CD8-positive, alpha-beta T cell (primary cell): ENCODE measurements at regions of chrX and their contacts with region 1.

Region 1: DNA sequence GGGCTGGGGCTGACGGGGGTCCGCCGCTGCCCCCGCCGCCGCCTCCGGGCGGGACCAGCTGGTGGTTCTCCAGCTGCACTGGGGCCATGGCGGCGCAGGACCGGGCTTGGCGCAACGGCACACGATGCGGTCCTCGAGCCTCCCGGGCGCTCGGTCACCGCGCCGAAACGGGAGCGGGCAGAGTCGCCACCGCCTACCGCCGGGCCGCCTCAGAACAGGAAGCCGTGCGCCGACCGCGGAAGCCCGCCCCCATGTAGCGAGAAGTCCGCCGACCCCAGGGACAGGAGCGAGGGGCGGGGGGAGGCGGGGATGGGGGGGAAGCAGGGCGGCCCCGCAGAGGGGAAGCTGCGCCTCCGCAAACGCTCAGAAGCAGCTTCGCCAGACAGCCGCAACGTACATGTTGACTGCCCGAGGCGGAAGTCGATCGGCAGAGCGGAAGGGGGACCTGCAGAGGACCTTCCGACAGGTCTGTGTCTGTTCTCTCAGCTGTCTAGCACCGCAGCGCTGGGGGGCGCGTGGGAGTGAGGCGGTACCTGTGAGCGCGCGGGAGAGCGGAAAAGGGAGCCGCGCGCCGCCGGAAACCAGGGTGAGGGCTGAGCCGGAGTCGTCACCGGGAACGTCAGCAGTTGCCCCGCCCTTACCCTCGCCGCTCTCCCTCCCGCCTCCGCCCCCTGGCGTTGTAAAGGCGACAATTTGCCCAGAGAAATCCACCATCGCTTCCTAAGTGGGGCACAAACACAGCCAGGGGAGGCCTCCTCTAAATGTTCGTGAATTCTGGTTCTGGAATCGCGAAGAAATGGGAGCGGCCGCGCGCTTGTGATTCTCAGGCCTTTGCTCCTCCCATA is at the start of gene MED14:
- DNase-seq: peak; percentile 76 to 96 (median 95)
- ATAC-seq: peak; percentile 89
- H3K4me3 ChIP-seq: peak within 1 kb of the TSS; percentile 77 to 84
- H3K4me3 Mint-ChIP-seq: peak within 1 kb of the TSS; percentile 89
- H3K27ac ChIP-seq: peak within 1 kb of the TSS; percentile 98 to 99
- H3K27ac Mint-ChIP-seq: peak within 1 kb of the TSS; percentile 97
- H3K4me1 ChIP-seq: peaks cover 13% of the 10 kb centered on the region
- H3K4me1 Mint-ChIP-seq: peaks cover 52% of the 10 kb centered on the region
- H3K27me3 ChIP-seq: no peaks in the 10 kb centered on the region
- H3K27me3 Mint-ChIP-seq: no peaks in the 10 kb centered on the region
- CTCF ChIP-seq: peak; percentile 36
- total RNA-seq, gene MED14: 69.7 to 70.2 TPM

Region 2: GRCh38 chrX:40539214-40540142 is 196.1 kb before region 1 on chrX:
- CTCF ChIA-PET with region 1: no interaction called
- POLR2A ChIA-PET with region 1: no interaction called
- intact Hi-C with region 1: loop called in 1 of 2 experiments (anchors 1 kb)
- DNase-seq: peak; percentile 46 to 80 (median 72)
- ATAC-seq: peak; percentile 94
- H3K4me3 ChIP-seq: no peak overlapping the region
- H3K4me3 Mint-ChIP-seq: peak overlapping the region; percentile 50
- H3K27ac ChIP-seq: no peak overlapping the region
- H3K27ac Mint-ChIP-seq: peak overlapping the region; percentile 76
- H3K4me1 ChIP-seq: peaks cover 11% of the 10 kb centered on the region
- H3K4me1 Mint-ChIP-seq: peaks cover 20% of the 10 kb centered on the region
- H3K27me3 ChIP-seq: no peaks in the 10 kb centered on the region
- H3K27me3 Mint-ChIP-seq: no peaks in the 10 kb centered on the region
- CTCF ChIP-seq: peak; percentile 35

Region 3: DNA sequence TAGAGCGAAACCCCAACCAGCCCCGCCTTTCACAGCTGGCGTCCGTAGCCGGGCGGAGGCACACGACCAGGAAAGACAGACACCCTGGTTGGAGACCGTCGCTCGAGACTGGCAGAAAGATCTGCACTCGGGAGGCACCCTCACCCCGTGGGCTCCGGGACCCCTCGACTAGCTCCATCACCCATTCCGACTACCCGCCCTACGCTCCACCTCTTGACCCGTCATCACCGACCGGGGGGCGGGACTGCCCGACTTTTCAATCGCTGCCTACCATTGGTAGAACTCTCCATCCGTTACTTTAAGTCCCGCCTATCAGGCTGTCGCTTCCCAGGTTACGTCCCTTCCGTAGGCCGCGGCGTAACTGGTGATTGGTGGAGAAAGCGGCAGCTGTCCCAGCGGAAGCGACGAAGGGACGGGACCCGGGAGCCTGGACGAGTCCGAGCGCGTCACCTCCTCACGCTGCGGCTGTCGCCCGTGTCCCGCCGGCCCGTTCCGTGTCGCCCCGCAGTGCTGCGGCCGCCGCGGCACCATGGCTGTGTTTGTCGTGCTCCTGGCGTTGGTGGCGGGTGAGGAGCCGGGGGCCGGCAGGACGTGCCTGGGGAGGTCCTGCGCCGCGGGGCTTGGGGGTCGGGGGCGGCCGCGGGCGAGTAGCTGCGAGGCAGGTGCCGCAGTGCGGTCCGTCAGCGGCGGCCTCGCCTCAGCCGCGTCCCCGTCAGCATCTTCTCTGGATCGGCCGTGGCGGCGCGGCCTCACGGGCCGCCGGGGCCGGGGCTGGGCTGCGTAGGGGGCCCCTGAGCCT is 154.8 kb before region 1 on chrX and contains the start of gene ATP6AP2:
- CTCF ChIA-PET with region 1: no interaction called
- POLR2A ChIA-PET with region 1: interaction called, 3 read pairs
- intact Hi-C with region 1: loop called in 1 of 2 experiments (anchors 5 kb)
- DNase-seq: peak; percentile 76 to 95 (median 88)
- ATAC-seq: peak; percentile 95
- H3K4me3 ChIP-seq: peak within 1 kb of the TSS; percentile 82 to 93
- H3K4me3 Mint-ChIP-seq: peak within 1 kb of the TSS; percentile 91
- H3K27ac ChIP-seq: peak within 1 kb of the TSS; percentile 89 to 96
- H3K27ac Mint-ChIP-seq: peak within 1 kb of the TSS; percentile 97
- H3K4me1 ChIP-seq: peaks cover 18% of the 10 kb centered on the region
- H3K4me1 Mint-ChIP-seq: peaks cover 30% of the 10 kb centered on the region
- H3K27me3 ChIP-seq: no peaks in the 10 kb centered on the region
- H3K27me3 Mint-ChIP-seq: no peaks in the 10 kb centered on the region
- CTCF ChIP-seq: no peak
- total RNA-seq, gene ATP6AP2: 62.0 to 67.3 TPM

Region 4: GRCh38 chrX:40694802-40695201 is 40.7 kb before region 1 on chrX:
- CTCF ChIA-PET with region 1: no interaction called
- POLR2A ChIA-PET with region 1: no interaction called
- intact Hi-C with region 1: loop called in 1 of 2 experiments (anchors 5 kb)
- DNase-seq: no peak
- ATAC-seq: no peak
- H3K4me3 ChIP-seq: no peak overlapping the region
- H3K4me3 Mint-ChIP-seq: no peak overlapping the region
- H3K27ac ChIP-seq: no peak overlapping the region
- H3K27ac Mint-ChIP-seq: no peak overlapping the region
- H3K4me1 ChIP-seq: no peaks in the 10 kb centered on the region
- H3K4me1 Mint-ChIP-seq: no peaks in the 10 kb centered on the region
- H3K27me3 ChIP-seq: no peaks in the 10 kb centered on the region
- H3K27me3 Mint-ChIP-seq: no peaks in the 10 kb centered on the region
- CTCF ChIP-seq: no peak

Region 5: DNA sequence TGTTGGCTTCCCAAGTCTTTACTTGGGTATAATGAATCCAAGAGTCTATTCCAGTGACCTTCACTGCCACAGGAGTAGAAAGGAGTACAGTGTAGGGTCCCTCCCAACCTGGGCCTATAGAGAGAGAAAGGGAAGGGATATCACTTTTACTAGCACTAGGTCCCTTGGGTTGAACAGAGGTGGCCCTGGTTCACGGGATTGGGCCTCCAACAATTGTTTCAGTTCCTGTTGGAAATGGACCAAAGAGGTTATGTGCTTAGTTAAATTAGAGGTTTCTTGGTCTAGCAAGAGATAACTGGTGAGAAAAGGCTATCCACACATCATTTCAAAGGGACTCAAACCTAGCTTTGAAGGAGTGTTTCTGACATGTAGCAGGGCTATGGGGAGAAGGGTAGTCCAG is 56.9 kb after region 1 on chrX:
- CTCF ChIA-PET with region 1: interaction called, 11 read pairs
- POLR2A ChIA-PET with region 1: no interaction called
- intact Hi-C with region 1: loop called in 1 of 2 experiments (anchors 5 kb)
- DNase-seq: no peak
- ATAC-seq: no peak
- H3K4me3 ChIP-seq: no peak overlapping the region
- H3K4me3 Mint-ChIP-seq: no peak overlapping the region
- H3K27ac ChIP-seq: no peak overlapping the region
- H3K27ac Mint-ChIP-seq: no peak overlapping the region
- H3K4me1 ChIP-seq: no peaks in the 10 kb centered on the region
- H3K4me1 Mint-ChIP-seq: peaks cover 3% of the 10 kb centered on the region
- H3K27me3 ChIP-seq: no peaks in the 10 kb centered on the region
- H3K27me3 Mint-ChIP-seq: no peaks in the 10 kb centered on the region
- CTCF ChIP-seq: no peak

Region 6: GRCh38 chrX:41116948-41117347 is 381.4 kb after region 1 on chrX:
- CTCF ChIA-PET with region 1: no interaction called
- POLR2A ChIA-PET with region 1: interaction called, 3 read pairs
- intact Hi-C with region 1: loop called (anchors 10 kb)
- DNase-seq: peak in 2 of 9 experiments; percentile 48 to 65
- ATAC-seq: peak; percentile 62
- H3K4me3 ChIP-seq: no peak overlapping the region
- H3K4me3 Mint-ChIP-seq: peak overlapping the region; percentile 63
- H3K27ac ChIP-seq: peak overlapping the region in 1 of 2 experiments; percentile 38
- H3K27ac Mint-ChIP-seq: peak overlapping the region; percentile 79
- H3K4me1 ChIP-seq: peaks cover 43% of the 10 kb centered on the region
- H3K4me1 Mint-ChIP-seq: peaks cover 74% of the 10 kb centered on the region
- H3K27me3 ChIP-seq: no peaks in the 10 kb centered on the region
- H3K27me3 Mint-ChIP-seq: no peaks in the 10 kb centered on the region
- CTCF ChIP-seq: no peak